MCF 10A (cell line): ENCODE measurements at regions of chr14 and their contacts with region 1.

Region 1: GRCh38 chr14:73741386-73741875 is 27.2 kb upstream of the PNMA1 start:
- DNase-seq: peak; percentile 84
- H3K4me3 Mint-ChIP-seq: peak overlapping the region; percentile 65
- H3K27ac Mint-ChIP-seq: peak overlapping the region; percentile 92
- H3K4me1 Mint-ChIP-seq: peaks cover 55% of the 10 kb centered on the region
- H3K27me3 Mint-ChIP-seq: no peaks in the 10 kb centered on the region
- CTCF ChIP-seq: no peak

Region 2: GRCh38 chr14:73599499-73599898 is 141.9 kb before region 1 on chr14:
- CTCF ChIA-PET with region 1: no interaction called
- POLR2A ChIA-PET with region 1: no interaction called
- intact Hi-C with region 1: no loop called
- DNase-seq: no peak
- H3K4me3 Mint-ChIP-seq: no peak overlapping the region
- H3K27ac Mint-ChIP-seq: no peak overlapping the region
- H3K4me1 Mint-ChIP-seq: no peaks in the 10 kb centered on the region
- H3K27me3 Mint-ChIP-seq: no peaks in the 10 kb centered on the region
- CTCF ChIP-seq: no peak

Region 3: DNA sequence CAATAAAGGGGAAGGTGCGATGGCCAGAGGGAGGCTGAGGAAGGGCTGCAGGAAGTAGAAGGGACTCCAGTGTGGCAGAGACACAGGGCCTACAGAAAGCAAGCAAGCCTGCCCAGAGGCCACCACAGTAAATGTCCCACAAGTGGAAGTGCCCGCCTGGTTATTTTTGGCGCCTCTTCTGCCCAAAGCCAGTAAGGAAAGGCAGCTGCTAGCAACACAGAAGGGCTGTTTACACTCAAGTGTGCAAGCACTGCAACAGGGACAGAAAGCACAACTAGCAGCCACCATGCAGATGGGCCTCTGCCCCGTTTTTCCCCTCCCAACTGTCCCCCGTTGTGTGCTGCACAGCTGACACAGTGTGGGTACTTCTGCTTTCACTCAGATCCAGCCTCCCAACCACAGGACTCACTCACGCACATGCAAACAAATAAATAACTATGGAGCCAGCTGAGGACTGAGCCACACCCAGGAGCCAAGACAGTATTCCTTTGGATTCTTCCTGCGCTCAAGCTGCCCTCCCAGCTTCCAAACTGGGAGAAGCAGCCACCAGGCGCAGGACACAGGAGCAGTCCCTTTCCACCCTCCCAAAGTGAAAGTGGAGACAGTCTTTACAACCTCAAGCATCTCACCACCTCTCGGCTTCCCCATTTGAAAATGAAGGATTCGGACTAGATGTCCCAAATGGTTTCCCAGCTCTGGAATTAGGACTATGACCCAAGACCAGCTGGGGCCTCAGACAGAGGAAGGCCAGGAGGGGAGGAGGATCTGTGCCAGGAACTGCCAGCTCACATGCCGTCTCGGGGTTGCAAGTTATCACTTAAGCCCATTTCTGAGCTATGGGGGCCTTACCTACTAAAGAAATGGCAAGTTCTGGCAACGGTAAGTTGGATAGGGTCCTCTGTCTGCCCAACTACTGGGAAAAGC is 12.8 kb after region 1 on chr14:
- CTCF ChIA-PET with region 1: interaction called, 24 read pairs
- POLR2A ChIA-PET with region 1: interaction called, 296 read pairs
- intact Hi-C with region 1: loop called (anchors 1 kb)
- DNase-seq: peak; percentile 48
- H3K4me3 Mint-ChIP-seq: peak overlapping the region; percentile 86
- H3K27ac Mint-ChIP-seq: peak overlapping the region; percentile 89
- H3K4me1 Mint-ChIP-seq: peaks cover 71% of the 10 kb centered on the region
- H3K27me3 Mint-ChIP-seq: no peaks in the 10 kb centered on the region
- CTCF ChIP-seq: no peak

Region 4: DNA sequence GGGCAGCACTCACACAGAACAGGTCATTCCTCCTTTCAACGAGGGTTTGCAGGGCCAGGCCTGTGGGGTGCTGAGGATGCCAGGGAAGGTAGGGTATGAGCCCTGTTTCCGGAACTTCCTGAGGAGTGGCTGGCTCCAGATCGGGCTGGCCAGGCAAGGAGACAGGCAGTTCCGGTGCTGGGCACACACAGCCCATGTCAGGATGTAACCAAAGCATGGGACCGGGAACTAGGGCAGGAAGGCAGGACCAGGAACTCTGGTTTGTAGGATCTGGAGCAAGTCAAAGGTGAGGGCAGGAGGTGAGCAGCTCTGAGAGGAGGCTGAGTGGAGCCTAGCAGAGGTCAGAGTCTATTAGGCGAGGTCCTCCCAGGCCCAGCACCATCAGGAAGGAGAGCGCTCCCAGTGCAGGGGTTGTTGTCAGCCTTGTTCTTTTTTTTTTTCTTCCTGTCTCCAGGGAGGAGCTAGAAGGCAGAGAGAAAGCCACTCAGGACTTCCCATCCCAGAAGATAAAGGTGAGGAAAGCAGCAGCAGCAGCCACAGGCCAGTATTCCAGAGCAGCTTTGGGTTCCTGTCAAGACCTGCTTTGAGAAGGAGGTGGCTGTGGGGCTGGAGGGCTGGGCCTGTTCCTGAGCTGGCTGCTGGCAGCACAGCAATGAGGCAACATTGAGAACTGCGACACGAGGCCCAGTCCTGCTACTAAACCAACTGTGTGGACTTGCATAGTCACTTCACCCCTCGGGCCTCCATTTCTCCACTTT is 61.2 kb after region 1 on chr14:
- CTCF ChIA-PET with region 1: interaction called, 3 read pairs
- POLR2A ChIA-PET with region 1: interaction called, 10 read pairs
- intact Hi-C with region 1: no loop called
- DNase-seq: peak; percentile 80
- H3K4me3 Mint-ChIP-seq: peak overlapping the region; percentile 47
- H3K27ac Mint-ChIP-seq: peak overlapping the region; percentile 86
- H3K4me1 Mint-ChIP-seq: peaks cover 25% of the 10 kb centered on the region
- H3K27me3 Mint-ChIP-seq: no peaks in the 10 kb centered on the region
- CTCF ChIP-seq: no peak

Region 5: GRCh38 chr14:73825551-73826188 is 84.2 kb after region 1 on chr14:
- CTCF ChIA-PET with region 1: interaction called, 6 read pairs
- POLR2A ChIA-PET with region 1: interaction called, 15 read pairs
- intact Hi-C with region 1: loop called (anchors 5 kb)
- DNase-seq: peak; percentile 89
- H3K4me3 Mint-ChIP-seq: no peak overlapping the region
- H3K27ac Mint-ChIP-seq: no peak overlapping the region
- H3K4me1 Mint-ChIP-seq: peaks cover 19% of the 10 kb centered on the region
- H3K27me3 Mint-ChIP-seq: no peaks in the 10 kb centered on the region
- CTCF ChIP-seq: peak; percentile 89

Region 6: GRCh38 chr14:74140374-74140850 is 399.0 kb after region 1 on chr14:
- CTCF ChIA-PET with region 1: no interaction called
- POLR2A ChIA-PET with region 1: no interaction called
- intact Hi-C with region 1: no loop called
- DNase-seq: no peak
- H3K4me3 Mint-ChIP-seq: no peak overlapping the region
- H3K27ac Mint-ChIP-seq: no peak overlapping the region
- H3K4me1 Mint-ChIP-seq: no peaks in the 10 kb centered on the region
- H3K27me3 Mint-ChIP-seq: no peaks in the 10 kb centered on the region
- CTCF ChIP-seq: no peak

Region 7: DNA sequence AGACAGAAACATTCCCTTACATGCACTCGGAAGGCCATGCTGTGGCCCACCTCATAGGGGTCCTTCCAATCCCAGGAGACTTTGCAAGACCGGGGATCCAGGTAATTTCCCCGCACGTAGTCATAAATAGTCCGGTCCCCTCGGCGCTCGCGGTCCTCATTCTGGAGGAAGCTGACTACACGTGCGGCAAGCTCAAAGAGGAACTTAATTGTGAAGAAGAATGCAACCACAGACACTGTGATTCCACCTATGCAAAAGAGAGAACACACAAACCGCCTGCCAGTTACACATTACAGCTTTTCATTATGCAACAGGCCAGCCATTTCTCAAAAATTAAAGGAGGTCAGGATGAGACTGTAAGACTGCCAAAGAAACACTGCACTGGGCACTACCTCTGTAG is 943.0 kb after region 1 on chr14:
- CTCF ChIA-PET with region 1: no interaction called
- POLR2A ChIA-PET with region 1: no interaction called
- intact Hi-C with region 1: no loop called
- DNase-seq: no peak
- H3K4me3 Mint-ChIP-seq: no peak overlapping the region
- H3K27ac Mint-ChIP-seq: no peak overlapping the region
- H3K4me1 Mint-ChIP-seq: no peaks in the 10 kb centered on the region
- H3K27me3 Mint-ChIP-seq: no peaks in the 10 kb centered on the region
- CTCF ChIP-seq: no peak